ENCODE measurements at regions of chr5 and their contacts with region 1.

Region 1: GRCh38 chr5:131170540-131171275 is at the start of gene LYRM7:
- DNase-seq: peak; percentile 98 to 99
- H3K4me3 ChIP-seq: peak within 1 kb of the TSS; percentile 61 to 63
- H3K27ac ChIP-seq: peak within 1 kb of the TSS; percentile 81
- H3K4me1 ChIP-seq: peaks cover 16% of the 10 kb centered on the region
- H3K27me3 ChIP-seq: no peaks in the 10 kb centered on the region
- CTCF ChIP-seq: peak in 1 of 3 experiments; percentile 11
- POLR2A ChIP-seq: no peak
- total RNA-seq, gene LYRM7: 3.9 TPM

Region 2: DNA sequence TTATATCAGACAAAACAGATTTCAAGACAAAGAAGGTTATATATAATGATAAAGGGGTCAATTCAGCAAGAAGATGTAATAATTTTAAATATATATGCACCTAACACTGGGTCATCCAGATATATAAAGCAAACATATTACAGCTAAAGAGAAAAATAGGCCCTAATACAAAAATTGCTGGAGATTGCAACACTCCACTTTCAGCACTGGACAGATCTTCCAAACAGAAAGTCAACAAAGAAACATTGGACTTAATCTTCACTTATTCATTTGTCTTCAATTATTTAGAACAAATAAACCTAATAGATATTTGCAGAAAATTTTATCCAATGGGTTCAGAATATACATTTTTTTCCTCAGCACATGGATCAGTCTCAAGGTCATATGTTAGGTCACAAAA is 729.0 kb after region 1 on chr5:
- intact Hi-C with region 1: loop called (anchors 5 kb)
- DNase-seq: no peak
- H3K4me3 ChIP-seq: no peak overlapping the region
- H3K27ac ChIP-seq: no peak overlapping the region
- H3K4me1 ChIP-seq: no peaks in the 10 kb centered on the region
- H3K27me3 ChIP-seq: no peaks in the 10 kb centered on the region
- CTCF ChIP-seq: no peak
- POLR2A ChIP-seq: no peak